Activated CD4-positive, alpha-beta T cell treated with anti-CD3 and anti-CD28 coated beads for 36 hours (primary cell): ENCODE measurements at regions of chr2 and their contacts with region 1.

Region 1: DNA sequence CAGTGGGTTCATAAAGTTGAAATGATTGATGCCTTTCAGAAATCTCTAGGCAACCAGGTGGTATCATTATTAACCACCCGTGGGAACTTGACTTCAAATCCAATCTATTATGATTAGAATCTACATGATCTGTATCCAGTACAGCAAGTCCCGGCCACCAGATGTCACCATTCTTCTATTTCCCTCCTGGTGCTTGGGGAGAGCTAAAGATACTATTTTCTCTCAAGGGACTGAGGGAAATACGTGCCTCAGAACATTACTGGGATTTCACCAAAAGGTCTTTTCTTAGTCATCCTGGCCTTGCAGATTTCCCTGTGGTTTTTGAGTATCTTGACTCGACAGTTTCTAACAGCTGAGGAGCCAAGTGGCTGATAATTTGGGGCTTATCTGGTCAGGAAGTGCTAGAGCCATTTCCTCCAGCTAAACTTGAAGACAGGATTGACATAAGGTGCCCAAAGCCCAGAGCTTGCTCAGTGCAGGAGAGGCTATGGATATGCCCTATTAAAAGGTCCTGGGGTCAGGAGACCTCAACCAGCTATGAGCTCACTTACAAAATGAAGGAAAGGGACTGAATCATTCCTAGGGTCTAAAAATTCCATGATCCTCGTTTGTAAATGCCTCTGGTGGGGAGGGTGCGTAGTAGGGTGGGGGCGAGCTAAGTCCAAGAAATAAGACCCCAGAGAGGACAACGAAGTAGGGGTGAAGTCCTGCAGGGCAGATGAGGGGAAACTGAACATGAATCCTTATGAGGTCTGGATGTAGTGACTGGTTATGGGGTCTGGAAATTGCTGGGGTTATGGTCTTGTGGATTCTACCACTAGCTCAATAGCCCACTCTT is 135.4 kb upstream of the MGAT5 start:
- DNase-seq: peak; percentile 93
- ATAC-seq: peak; percentile 64
- H3K4me3 Mint-ChIP-seq: peak overlapping the region; percentile 80
- H3K27ac Mint-ChIP-seq: no peak overlapping the region
- H3K4me1 Mint-ChIP-seq: peaks cover 31% of the 10 kb centered on the region
- H3K27me3 Mint-ChIP-seq: peaks cover 2% of the 10 kb centered on the region

Region 2: DNA sequence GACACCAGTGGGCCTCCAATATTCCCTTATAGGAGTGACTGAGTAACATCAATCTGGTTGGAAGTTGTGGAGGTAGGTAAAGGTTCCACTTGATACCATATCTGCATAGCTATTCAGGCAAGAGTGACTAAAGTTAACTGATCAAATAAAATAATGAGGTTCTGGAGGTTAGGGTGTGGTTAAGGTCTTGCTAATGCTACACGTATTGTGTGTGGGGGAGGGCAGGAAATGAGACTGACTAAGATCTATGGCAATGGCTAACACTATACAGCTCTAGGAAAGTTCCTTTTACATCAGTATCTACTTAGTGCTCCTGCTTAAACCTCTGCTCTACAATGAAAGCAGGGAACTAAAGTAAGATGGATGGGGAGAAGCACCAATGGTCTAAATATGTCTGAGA is 13.7 kb before region 1 on chr2:
- CTCF ChIA-PET with region 1: interaction called, 10 read pairs
- POLR2A ChIA-PET with region 1: no interaction called
- intact Hi-C with region 1: no loop called
- DNase-seq: peak; percentile 55
- ATAC-seq: peak; percentile 99
- H3K4me3 Mint-ChIP-seq: no peak overlapping the region
- H3K27ac Mint-ChIP-seq: no peak overlapping the region
- H3K4me1 Mint-ChIP-seq: peaks cover 9% of the 10 kb centered on the region
- H3K27me3 Mint-ChIP-seq: no peaks in the 10 kb centered on the region

Region 3: GRCh38 chr2:134207564-134208209 is 89.2 kb after region 1 on chr2:
- CTCF ChIA-PET with region 1: interaction called, 73 read pairs
- POLR2A ChIA-PET with region 1: no interaction called
- intact Hi-C with region 1: loop called (anchors 5 kb)
- DNase-seq: peak; percentile 82
- ATAC-seq: peak; percentile 87
- H3K4me3 Mint-ChIP-seq: no peak overlapping the region
- H3K27ac Mint-ChIP-seq: no peak overlapping the region
- H3K4me1 Mint-ChIP-seq: peaks cover 6% of the 10 kb centered on the region
- H3K27me3 Mint-ChIP-seq: no peaks in the 10 kb centered on the region

Region 4: DNA sequence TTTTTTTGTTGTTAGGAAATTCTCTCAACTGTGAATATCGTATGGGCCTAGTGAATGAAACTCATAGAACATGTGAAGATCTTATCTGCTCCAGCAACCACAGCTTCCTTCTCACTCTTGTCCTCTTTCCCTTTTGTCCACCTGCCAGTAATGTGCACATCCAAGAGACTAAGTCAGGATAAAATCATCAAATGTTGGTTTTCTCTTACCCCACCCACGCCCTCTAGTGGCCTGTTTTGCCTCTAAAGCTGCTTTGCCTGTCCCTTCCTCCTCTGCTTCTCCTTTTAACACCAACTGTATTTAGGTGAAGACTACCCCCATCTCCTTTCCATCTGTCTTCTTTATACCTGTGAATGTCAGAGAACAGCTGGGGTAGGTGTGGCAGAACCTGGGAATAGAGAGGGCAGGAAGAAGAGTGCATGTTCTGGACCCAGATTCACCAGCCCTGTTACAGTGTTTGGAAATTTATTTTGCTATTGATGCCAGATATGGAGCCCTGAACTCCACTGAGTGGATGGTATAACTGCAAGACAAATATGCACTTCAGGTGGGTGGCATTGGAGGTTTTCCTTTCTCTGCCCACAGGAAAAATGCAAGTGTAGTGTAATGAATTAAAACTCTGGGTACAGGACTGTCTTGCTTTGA is 127.0 kb after region 1 on chr2:
- CTCF ChIA-PET with region 1: interaction called, 17 read pairs
- POLR2A ChIA-PET with region 1: interaction called, 4 read pairs
- intact Hi-C with region 1: loop called (anchors 1 kb)
- DNase-seq: peak; percentile 87
- ATAC-seq: peak; percentile 37
- H3K4me3 Mint-ChIP-seq: no peak overlapping the region
- H3K27ac Mint-ChIP-seq: no peak overlapping the region
- H3K4me1 Mint-ChIP-seq: peaks cover 82% of the 10 kb centered on the region
- H3K27me3 Mint-ChIP-seq: no peaks in the 10 kb centered on the region

Region 5: DNA sequence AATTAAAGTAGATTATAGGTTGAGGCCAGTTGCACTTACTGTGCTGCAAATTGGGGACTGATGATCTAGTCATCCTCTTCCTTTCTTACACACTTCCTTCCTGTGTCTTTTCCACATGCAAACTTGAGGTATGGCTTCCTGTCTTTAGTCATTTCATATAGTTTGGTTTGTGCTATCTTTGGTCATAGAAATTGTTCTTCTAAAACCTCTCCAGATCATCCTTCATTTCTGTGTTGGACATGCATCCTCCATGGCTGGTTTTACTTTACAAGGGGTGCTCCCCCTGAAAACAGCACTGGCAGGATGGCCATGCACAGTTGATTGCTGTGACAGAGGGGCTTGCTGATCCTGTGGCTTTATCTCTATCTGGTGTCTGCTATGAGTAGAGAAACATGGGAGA is 171.9 kb after region 1 on chr2:
- CTCF ChIA-PET with region 1: interaction called, 6 read pairs
- POLR2A ChIA-PET with region 1: no interaction called
- intact Hi-C with region 1: loop called in 1 of 2 experiments (anchors 2 kb)
- DNase-seq: peak; percentile 22
- ATAC-seq: peak; percentile 66
- H3K4me3 Mint-ChIP-seq: no peak overlapping the region
- H3K27ac Mint-ChIP-seq: no peak overlapping the region
- H3K4me1 Mint-ChIP-seq: peaks cover 7% of the 10 kb centered on the region
- H3K27me3 Mint-ChIP-seq: no peaks in the 10 kb centered on the region

Region 6: GRCh38 chr2:134668821-134669220 is 550.3 kb after region 1 on chr2:
- CTCF ChIA-PET with region 1: no interaction called
- POLR2A ChIA-PET with region 1: no interaction called
- intact Hi-C with region 1: loop called in 1 of 2 experiments (anchors 10 kb)
- DNase-seq: peak; percentile 89
- ATAC-seq: peak; percentile 92
- H3K4me3 Mint-ChIP-seq: no peak overlapping the region
- H3K27ac Mint-ChIP-seq: peak overlapping the region; percentile 32
- H3K4me1 Mint-ChIP-seq: peaks cover 67% of the 10 kb centered on the region
- H3K27me3 Mint-ChIP-seq: peaks cover 9% of the 10 kb centered on the region

Region 7: DNA sequence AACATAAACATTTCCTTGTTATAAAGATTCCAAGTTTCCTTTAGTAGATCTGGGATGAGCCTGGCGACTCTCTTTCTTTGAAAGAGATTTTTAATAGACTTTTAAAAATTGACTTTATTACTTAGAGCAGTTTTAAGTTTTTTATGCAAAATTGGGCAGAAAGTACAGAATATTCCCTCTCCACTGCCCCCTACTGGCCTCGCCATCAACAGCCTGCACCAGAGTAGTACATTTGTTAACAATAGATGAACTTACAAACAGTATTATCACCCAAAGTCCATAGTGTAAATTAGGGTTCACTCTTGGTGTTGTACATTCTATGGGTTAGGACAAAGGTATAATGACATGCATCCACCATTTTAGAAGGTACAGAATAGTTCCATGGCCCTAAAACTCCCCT is 924.8 kb after region 1 on chr2:
- CTCF ChIA-PET with region 1: no interaction called
- POLR2A ChIA-PET with region 1: no interaction called
- intact Hi-C with region 1: no loop called
- DNase-seq: peak; percentile 50
- ATAC-seq: no peak
- H3K4me3 Mint-ChIP-seq: no peak overlapping the region
- H3K27ac Mint-ChIP-seq: no peak overlapping the region
- H3K4me1 Mint-ChIP-seq: no peaks in the 10 kb centered on the region
- H3K27me3 Mint-ChIP-seq: peaks cover 2% of the 10 kb centered on the region

Region 8: DNA sequence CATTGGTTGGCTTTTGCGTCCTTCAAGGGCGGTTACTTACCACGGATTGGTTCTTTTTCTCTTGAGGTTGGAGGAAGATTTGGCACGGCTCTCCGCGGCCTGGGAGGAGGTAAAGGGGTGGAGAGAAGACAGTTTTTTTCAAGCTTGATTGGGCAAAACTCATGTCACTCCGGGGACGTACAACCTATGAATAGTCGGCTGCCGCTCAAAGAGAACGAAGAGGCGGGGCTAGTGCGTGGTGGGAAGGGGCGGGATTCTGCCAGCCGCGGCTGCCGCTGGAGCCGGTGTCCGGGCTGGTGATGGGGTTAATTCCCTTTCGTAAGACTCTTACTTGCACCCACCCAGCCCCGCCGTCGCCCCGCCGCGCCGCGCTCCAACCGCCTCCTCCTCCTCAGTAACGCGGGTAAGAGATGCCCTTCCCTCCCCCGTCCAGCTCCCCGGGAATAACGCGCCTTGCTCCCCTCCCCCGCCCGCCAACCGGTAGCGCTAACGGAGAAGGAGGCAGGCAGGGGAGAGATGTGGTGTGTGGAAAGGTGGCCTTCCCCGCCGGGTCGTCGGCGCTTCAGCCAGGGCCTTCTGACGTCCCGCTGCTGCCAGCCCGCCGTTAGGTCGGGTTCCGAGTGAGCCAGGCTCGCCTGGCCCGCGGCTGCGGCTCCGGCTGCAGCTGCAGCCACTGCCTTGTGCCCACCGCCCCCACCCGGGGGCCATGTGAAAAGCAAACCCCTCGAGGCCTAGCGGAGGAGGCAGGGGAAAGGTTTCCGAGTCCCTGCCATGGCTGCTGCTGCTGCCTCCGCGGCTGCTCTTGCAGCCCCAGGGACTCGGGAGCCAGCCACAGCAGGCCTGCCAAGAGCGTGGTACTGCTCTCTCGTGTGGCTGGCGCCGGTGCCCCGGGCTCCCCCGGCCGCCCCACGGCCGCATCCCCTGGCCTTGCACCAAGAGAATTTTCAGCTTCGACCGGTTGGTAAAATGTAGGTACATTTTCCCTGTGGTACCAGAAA is 1413.0 kb after region 1 on chr2 and contains the start of gene R3HDM1:
- CTCF ChIA-PET with region 1: no interaction called
- POLR2A ChIA-PET with region 1: no interaction called
- intact Hi-C with region 1: loop called in 1 of 2 experiments (anchors 5 kb)
- DNase-seq: peak; percentile 96
- ATAC-seq: peak; percentile 88
- H3K4me3 Mint-ChIP-seq: no peak within 1 kb of the TSS
- H3K27ac Mint-ChIP-seq: peak within 1 kb of the TSS; percentile 84
- H3K4me1 Mint-ChIP-seq: peaks cover 32% of the 10 kb centered on the region
- H3K27me3 Mint-ChIP-seq: no peaks in the 10 kb centered on the region
- total RNA-seq, gene R3HDM1: 62.6 to 100.0 TPM